Cardiac septum (tissue), 1 donor: ENCODE measurements at regions of chr13 and their contacts with region 1.

Region 1: DNA sequence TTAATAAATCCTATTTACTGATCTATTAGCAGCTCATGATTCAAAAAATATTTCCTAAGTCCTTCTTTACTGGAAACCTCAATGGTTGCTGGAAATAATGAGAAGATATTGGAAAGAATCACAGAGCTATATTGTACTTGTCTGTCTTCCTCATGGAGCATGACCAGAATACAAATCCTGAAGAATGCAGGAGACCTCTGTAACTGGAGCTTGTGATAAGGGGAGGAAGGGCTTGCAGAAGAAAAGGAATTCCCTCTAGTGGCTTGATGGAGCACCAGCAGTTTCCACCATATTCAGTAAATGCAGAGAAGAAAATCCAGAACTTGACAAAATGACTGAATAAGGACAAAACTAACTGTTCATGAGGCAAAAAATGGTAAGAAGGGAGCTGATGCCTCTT is 1333.1 kb downstream of the EFNB2 start:
- DNase-seq: no peak

Region 2: DNA sequence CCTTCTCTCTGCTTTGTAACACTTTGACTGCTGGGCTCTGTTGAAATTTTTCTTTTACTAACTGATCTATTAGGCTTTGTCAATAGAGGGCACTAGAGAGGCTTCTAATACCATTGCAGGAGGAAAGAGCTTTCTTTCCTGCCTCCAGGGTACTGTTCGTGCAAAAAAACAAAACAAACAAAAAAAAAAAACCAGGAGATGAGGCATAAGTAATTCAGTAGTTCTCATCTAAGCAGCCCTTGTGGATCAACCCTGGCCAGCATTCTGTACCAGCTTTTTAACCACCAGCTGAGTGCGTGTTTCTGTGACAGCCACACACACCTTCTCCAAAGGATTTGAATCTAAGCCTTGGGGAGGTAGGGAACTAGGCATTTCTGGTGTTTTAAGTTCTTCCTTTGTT is 428.6 kb before region 1 on chr13:
- intact Hi-C with region 1: loop called (anchors 10 kb)
- DNase-seq: no peak